ENCODE measurements at regions of chr1 and their contacts with region 1.

Region 1: GRCh38 chr1:41558761-41559171 is 74.3 kb upstream of the EDN2 start:
- DNase-seq: no peak
- ATAC-seq: no peak
- H3K4me3 ChIP-seq: no peak overlapping the region
- H3K4me3 Mint-ChIP-seq: no peak overlapping the region
- H3K27ac ChIP-seq: no peak overlapping the region
- H3K27ac Mint-ChIP-seq: no peak overlapping the region
- H3K4me1 ChIP-seq: no peaks in the 10 kb centered on the region
- H3K4me1 Mint-ChIP-seq: peaks cover 0 to 2% (median 0%) of the 10 kb centered on the region in 3 donors
- H3K27me3 ChIP-seq: no peaks in the 10 kb centered on the region
- H3K27me3 Mint-ChIP-seq: no peaks in the 10 kb centered on the region

Region 2: DNA sequence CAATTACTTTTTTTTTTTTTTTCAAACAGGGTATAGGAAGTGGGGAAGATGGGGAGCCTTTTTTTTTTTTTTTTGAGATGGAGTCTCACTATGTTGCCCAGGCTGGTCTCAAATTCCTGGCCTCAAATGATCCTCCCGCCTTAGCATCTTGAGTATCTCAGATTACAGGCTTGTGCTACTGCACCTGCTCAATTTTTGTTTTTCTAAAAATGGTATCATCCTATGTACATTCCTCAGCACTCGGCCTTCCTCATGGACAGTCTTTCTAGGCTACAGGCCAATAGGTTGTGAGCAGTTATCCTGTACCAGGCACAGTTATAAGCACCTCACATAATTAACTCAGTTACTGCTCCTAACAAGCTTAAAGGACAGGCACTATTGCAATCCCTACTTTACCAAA is 57.8 kb after region 1 on chr1:
- CTCF ChIA-PET with region 1: no interaction called
- POLR2A ChIA-PET with region 1: interaction called in 1 of 2 experiments, 16 read pairs
- DNase-seq: no peak
- ATAC-seq: no peak
- H3K4me3 ChIP-seq: no peak overlapping the region
- H3K4me3 Mint-ChIP-seq: no peak overlapping the region
- H3K27ac ChIP-seq: no peak overlapping the region
- H3K27ac Mint-ChIP-seq: no peak overlapping the region
- H3K4me1 ChIP-seq: peaks cover 0 to 3% of the 10 kb centered on the region in 2 experiments
- H3K4me1 Mint-ChIP-seq: peaks cover 0 to 21% (median 10%) of the 10 kb centered on the region in 3 donors
- H3K27me3 ChIP-seq: no peaks in the 10 kb centered on the region
- H3K27me3 Mint-ChIP-seq: no peaks in the 10 kb centered on the region

Measured in T-cell (primary cell).